ENCODE measurements at regions of chr19 and their contacts with region 1.

Region 1: DNA sequence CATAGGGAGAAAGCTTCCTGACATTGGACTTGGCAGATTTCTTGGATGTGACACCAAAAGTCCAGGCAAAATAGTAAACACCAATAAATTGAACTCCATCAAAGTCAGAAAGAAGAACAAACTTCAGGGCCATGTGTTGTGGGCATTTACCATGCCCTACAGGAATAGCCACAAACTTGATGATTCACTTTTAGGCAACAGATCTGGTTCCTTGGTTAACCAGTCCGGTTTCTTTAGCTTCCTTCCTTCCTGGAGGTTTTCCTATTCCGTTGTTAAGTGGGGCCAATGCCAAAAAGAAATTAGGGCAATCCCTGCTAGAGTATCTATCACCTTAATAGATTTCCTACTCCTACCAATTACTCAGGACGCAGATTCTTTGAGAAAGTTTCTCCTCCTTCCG is 25.2 kb downstream of the IGFL1 start:
- DNase-seq: no peak
- ATAC-seq: no peak
- H3K4me3 ChIP-seq: no peak overlapping the region
- H3K27ac ChIP-seq: no peak overlapping the region
- H3K4me1 ChIP-seq: no peaks in the 10 kb centered on the region
- H3K27me3 ChIP-seq: peaks cover 38% of the 10 kb centered on the region
- CTCF ChIP-seq: no peak
- POLR2A ChIP-seq: no peak
- RAD21 ChIP-seq: no peak

Region 2: GRCh38 chr19:46090444-46090843 is 164.3 kb before region 1 on chr19:
- CTCF ChIA-PET with region 1: no interaction called
- POLR2A ChIA-PET with region 1: no interaction called
- dilution Hi-C with region 1: no loop called
- in situ Hi-C with region 1: no loop called
- intact Hi-C with region 1: loop called (anchors 5 kb)
- DNase-seq: no peak
- ATAC-seq: no peak
- H3K4me3 ChIP-seq: no peak overlapping the region
- H3K27ac ChIP-seq: no peak overlapping the region
- H3K4me1 ChIP-seq: no peaks in the 10 kb centered on the region
- H3K27me3 ChIP-seq: peaks cover 24% of the 10 kb centered on the region
- CTCF ChIP-seq: no peak
- POLR2A ChIP-seq: no peak
- RAD21 ChIP-seq: no peak

Region 3: GRCh38 chr19:46115396-46116106 is 139.2 kb before region 1 on chr19:
- CTCF ChIA-PET with region 1: no interaction called
- POLR2A ChIA-PET with region 1: no interaction called
- dilution Hi-C with region 1: no loop called
- in situ Hi-C with region 1: no loop called
- intact Hi-C with region 1: no loop called
- DNase-seq: peak; percentile 81
- ATAC-seq: peak; percentile 98
- H3K4me3 ChIP-seq: no peak overlapping the region
- H3K27ac ChIP-seq: no peak overlapping the region
- H3K4me1 ChIP-seq: peaks cover 3% of the 10 kb centered on the region; the same call in 1 of the 2 replicates
- H3K27me3 ChIP-seq: peaks cover 48% of the 10 kb centered on the region
- CTCF ChIP-seq: no peak
- POLR2A ChIP-seq: no peak
- RAD21 ChIP-seq: no peak

Region 4: DNA sequence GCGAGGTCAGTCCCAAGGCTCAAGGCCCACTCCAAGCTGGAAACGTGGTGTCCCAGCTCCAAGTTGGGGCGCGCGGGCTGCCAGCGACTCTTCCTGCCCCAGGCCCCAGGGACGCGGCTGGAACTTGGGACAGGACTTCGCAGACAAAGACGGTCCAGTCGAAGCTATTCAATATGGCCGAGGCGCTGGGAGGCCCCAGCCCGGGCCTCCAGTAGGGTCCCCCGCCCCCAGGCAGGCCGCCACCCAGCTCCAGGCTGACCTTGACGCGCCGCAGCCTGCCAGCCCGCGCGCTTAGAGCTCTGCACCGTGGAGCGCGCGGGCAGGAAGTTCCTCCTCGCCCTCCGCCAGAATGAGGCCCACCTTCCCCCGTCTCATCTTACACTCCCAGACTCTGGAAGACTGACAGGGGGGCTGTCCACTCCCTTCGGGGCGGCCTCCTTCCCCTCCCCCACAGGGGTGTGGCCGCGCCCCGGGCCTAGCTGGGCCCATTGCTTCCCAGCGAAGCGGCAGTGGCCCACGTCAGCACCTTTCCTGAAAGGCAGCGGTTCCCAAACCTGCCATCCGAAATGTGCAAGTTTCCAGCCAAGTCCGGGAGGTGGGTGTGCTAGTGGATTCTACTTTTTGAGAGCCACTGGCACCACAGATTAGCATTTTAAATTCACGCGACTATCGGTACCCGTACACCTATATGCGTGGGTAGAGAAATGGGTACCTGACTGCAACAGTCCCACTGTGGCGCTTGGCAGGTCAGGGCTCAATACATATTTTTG is 158.7 kb after region 1 on chr19 and contains the start of gene CCDC8:
- CTCF ChIA-PET with region 1: no interaction called
- POLR2A ChIA-PET with region 1: no interaction called
- dilution Hi-C with region 1: no loop called
- in situ Hi-C with region 1: no loop called
- intact Hi-C with region 1: no loop called
- DNase-seq: peak; percentile 92
- ATAC-seq: peak; percentile 83
- H3K4me3 ChIP-seq: peak within 1 kb of the TSS; percentile 57
- H3K27ac ChIP-seq: peak within 1 kb of the TSS; percentile 84
- H3K4me1 ChIP-seq: peaks cover 14% of the 10 kb centered on the region
- H3K27me3 ChIP-seq: no peaks in the 10 kb centered on the region
- CTCF ChIP-seq: no peak
- POLR2A ChIP-seq: peak; percentile 47; the same call in 1 of the 2 replicates
- RAD21 ChIP-seq: no peak
- total RNA-seq, gene CCDC8: 10.2 and 10.3 TPM in 2 replicates

Measured in IMR-90 (cell line).